ENCODE measurements at regions of chr20 and their contacts with region 1.

Region 1: GRCh38 chr20:18625907-18626655 is 38.2 kb downstream of the DTD1 start:
- DNase-seq: no peak
- ATAC-seq: no peak
- H3K4me3 ChIP-seq: no peak overlapping the region
- H3K27ac ChIP-seq: no peak overlapping the region
- H3K4me1 ChIP-seq: no peaks in the 10 kb centered on the region
- H3K27me3 ChIP-seq: no peaks in the 10 kb centered on the region
- CTCF ChIP-seq: no peak

Region 2: DNA sequence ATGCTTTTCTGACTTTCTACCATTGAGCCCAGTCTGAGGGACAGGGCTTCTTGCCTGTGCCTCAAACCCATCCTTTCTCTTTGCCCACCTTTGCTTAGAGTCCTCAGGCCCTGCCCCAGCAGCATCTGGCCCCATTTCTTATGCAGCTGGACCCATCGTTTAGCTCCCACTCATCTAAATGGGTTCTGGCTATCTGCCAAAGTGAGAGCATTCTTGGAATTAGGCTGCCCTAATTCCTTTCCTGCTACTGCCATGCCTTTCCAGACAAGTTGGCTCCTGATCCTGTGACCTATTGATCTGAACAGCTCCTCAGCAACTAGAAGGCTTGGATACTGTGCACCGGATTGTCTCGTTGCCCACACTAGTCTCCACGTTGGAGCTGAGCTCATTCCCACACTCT is 182.2 kb before region 1 on chr20:
- CTCF ChIA-PET with region 1: no interaction called
- POLR2A ChIA-PET with region 1: no interaction called
- in situ Hi-C with region 1: no loop called
- intact Hi-C with region 1: no loop called
- DNase-seq: no peak
- ATAC-seq: no peak
- H3K4me3 ChIP-seq: no peak overlapping the region
- H3K27ac ChIP-seq: no peak overlapping the region
- H3K4me1 ChIP-seq: no peaks in the 10 kb centered on the region
- H3K27me3 ChIP-seq: no peaks in the 10 kb centered on the region
- CTCF ChIP-seq: no peak

Region 3: GRCh38 chr20:18587665-18588573 is 38.2 kb before region 1 on chr20 and contains the start of gene DTD1:
- CTCF ChIA-PET with region 1: no interaction called
- POLR2A ChIA-PET with region 1: interaction called, 12 read pairs
- in situ Hi-C with region 1: no loop called
- intact Hi-C with region 1: no loop called
- DNase-seq: peak; percentile 38
- ATAC-seq: peak; percentile 98
- H3K4me3 ChIP-seq: peak within 1 kb of the TSS; percentile 74 to 80
- H3K27ac ChIP-seq: peak within 1 kb of the TSS; percentile 57
- H3K4me1 ChIP-seq: no peaks in the 10 kb centered on the region
- H3K27me3 ChIP-seq: no peaks in the 10 kb centered on the region
- CTCF ChIP-seq: peak; percentile 84
- total RNA-seq, gene DTD1: 23.6 TPM

Measured in Panc1 (cell line).